Endothelial cell of umbilical vein (primary cell): ENCODE measurements at regions of chr2 and their contacts with region 1.

Region 1: DNA sequence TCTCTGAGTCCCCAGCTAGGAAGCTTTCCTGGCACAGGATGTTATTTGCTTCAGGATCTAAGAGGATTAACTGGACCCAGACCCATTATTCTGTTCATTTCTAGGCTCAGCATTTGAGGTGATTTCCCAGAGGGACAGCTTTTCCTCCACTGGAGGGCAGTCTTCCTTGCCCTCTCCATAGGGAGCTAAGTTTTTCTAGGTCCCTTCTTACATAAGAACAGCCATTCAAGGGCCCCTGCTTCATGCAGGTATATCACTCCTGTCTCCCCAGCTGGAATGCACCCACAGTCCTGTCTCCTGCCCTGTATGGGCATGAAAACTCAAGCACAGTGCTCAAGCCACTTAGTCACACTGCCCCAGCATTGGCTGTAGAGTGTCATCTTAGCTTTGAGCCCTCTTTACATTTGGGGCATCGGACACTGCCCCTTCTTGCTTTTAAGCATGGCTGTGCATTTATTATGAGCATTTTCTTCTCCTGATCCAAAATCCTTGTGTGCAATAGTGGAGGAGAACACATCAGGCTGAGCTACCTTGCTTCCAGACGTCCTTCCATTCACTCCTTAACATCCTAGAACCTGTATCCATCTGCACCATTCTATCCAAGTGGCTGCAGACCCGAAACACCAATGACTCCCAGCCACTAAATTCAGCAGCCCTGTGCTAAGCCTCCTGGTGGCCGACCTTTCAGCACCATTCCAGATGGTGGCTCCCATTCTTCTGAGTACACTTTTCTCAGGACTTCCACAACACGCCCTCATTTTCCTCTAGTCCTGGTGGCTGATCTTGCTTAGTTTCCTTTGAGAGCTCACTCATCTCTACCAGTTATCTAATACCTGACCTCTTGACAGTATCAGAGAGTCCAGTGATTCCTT is 80.0 kb downstream of the COPS8 start:
- DNase-seq: peak; percentile 49
- H3K4me3 ChIP-seq: no peak overlapping the region
- H3K27ac ChIP-seq: no peak overlapping the region
- H3K4me1 ChIP-seq: no peaks in the 10 kb centered on the region
- H3K27me3 ChIP-seq: peaks cover 0 to 6% of the 10 kb centered on the region in 2 experiments
- CTCF ChIP-seq: peak; percentile 54 to 68
- POLR2A ChIP-seq: no peak

Region 2: DNA sequence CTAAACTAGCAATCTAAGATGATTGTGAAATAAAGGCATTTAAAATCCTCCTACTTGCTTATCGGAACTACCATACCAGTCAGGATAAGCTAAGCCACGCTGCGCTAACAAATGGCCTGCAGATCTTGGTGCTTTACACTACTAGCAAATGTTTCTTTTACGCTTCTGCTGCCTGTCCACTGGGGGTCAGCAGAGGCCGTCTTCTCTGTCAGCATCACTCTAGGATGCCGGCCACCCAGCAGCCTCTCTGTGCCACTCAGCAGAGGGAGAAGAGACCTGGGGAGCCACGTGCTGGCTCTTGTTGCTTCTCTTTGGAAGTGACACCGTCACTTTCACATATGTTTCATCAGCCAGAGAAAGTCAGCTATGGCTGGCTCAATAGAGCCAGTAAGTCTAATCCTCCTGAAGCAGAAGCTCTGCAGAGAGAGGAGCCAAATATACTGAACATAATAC is 43.4 kb before region 1 on chr2:
- CTCF ChIA-PET with region 1: interaction called, 16 read pairs
- POLR2A ChIA-PET with region 1: no interaction called
- dilution Hi-C with region 1: no loop called
- intact Hi-C with region 1: no loop called
- DNase-seq: peak; percentile 64
- H3K4me3 ChIP-seq: no peak overlapping the region
- H3K27ac ChIP-seq: no peak overlapping the region
- H3K4me1 ChIP-seq: peaks cover 3% of the 10 kb centered on the region
- H3K27me3 ChIP-seq: no peaks in the 10 kb centered on the region
- CTCF ChIP-seq: peak; percentile 64 to 73
- POLR2A ChIP-seq: no peak

Region 3: DNA sequence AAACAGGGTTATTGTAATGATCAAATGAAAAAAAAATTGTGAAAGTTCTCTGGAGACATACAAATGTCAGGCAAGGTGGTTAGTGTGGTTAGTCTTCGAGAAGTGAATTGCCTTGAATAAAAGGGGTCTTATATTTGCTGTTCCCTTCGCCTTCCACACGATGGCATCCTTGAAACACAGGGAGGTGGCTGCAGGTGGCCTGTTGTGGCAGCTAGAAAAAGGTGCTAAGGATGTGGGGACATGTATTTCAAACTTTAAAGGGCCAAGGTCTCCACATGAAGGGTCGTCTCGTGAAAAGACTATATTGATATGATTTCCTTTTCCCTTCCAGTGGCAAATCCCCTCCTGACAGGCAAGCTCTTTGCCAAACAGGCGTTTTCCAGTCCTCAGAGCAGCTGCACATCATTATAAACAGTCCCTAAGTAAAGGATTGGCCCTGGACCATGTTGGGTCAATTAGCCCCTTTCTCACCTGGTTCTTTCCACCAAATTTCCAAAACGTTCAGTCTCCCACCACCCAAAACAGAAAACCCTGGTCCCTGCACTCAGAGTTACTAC is 11.5 kb before region 1 on chr2:
- CTCF ChIA-PET with region 1: interaction called, 15 read pairs
- POLR2A ChIA-PET with region 1: no interaction called
- dilution Hi-C with region 1: no loop called
- intact Hi-C with region 1: no loop called
- DNase-seq: peak; percentile 59
- H3K4me3 ChIP-seq: no peak overlapping the region
- H3K27ac ChIP-seq: no peak overlapping the region
- H3K4me1 ChIP-seq: peaks cover 8% of the 10 kb centered on the region
- H3K27me3 ChIP-seq: no peaks in the 10 kb centered on the region
- CTCF ChIP-seq: peak; percentile 73 to 75
- POLR2A ChIP-seq: no peak

Region 4: GRCh38 chr2:237322564-237322963 is 156.9 kb after region 1 on chr2:
- CTCF ChIA-PET with region 1: interaction called, 6 read pairs
- POLR2A ChIA-PET with region 1: no interaction called
- dilution Hi-C with region 1: no loop called
- intact Hi-C with region 1: loop called (anchors 2 kb)
- DNase-seq: no peak
- H3K4me3 ChIP-seq: no peak overlapping the region
- H3K27ac ChIP-seq: no peak overlapping the region
- H3K4me1 ChIP-seq: no peaks in the 10 kb centered on the region
- H3K27me3 ChIP-seq: peaks cover 4 to 7% of the 10 kb centered on the region in 2 experiments
- CTCF ChIP-seq: peak in 1 of 2 donors; percentile 42
- POLR2A ChIP-seq: no peak

Region 5: DNA sequence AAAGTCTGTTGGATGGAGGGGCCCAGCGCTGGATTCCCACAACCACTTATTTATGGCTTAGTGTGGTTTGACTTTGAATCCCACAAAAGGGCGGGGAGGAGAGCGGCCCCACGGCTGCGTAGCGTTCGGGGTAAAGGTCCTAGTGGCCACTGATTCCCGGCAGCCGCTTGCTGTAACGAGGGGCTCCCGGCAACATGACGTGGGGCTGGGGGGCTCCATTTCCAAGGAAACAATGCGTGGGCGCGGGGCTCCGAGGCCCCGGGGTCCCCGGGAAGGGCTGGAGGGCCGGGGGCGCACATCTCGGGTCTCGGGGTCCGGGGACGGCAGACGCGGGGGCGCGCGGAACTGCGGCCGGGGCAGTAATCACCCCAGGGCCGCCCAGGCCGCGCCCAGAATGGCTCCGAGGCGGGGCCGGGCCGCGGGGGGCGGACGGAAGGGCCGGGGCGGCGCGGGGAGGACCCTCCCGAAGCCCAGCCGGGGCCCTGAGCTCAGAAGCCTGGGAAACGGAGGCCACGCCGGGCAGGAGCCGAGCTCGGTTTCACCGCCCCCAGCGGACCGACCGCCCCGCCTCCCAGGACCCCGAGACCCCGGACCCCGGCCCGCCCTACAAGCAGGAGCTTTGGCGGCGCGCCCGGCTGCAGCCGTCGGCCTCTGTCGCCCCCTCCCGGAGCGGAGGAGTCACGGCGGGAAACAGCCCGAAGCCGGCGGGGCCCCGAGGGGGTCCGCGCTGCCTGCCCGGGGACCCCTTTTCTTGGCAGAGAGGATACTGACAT is 309.5 kb after region 1 on chr2:
- CTCF ChIA-PET with region 1: interaction called, 13 read pairs
- POLR2A ChIA-PET with region 1: no interaction called
- dilution Hi-C with region 1: no loop called
- intact Hi-C with region 1: no loop called
- DNase-seq: peak; percentile 54
- H3K4me3 ChIP-seq: peak overlapping the region; percentile 38 to 51 (median 40)
- H3K27ac ChIP-seq: peak overlapping the region; percentile 23
- H3K4me1 ChIP-seq: peaks cover 12% of the 10 kb centered on the region
- H3K27me3 ChIP-seq: peaks cover 36 to 42% of the 10 kb centered on the region in 2 experiments
- CTCF ChIP-seq: peak; percentile 73 to 93
- POLR2A ChIP-seq: peak; percentile 23